ENCODE measurements at regions of chr20 and their contacts with region 1.

Region 1: GRCh38 chr20:56551571-56551970 is 18.5 kb downstream of the FAM209B start:
- DNase-seq: no peak
- H3K4me3 ChIP-seq: no peak overlapping the region
- H3K27ac ChIP-seq: no peak overlapping the region
- H3K4me1 ChIP-seq: peaks cover 6 to 13% (median 9%) of the 10 kb centered on the region in 4 experiments
- H3K27me3 ChIP-seq: peaks cover 0 to 2% (median 0%) of the 10 kb centered on the region in 5 experiments

Region 2: DNA sequence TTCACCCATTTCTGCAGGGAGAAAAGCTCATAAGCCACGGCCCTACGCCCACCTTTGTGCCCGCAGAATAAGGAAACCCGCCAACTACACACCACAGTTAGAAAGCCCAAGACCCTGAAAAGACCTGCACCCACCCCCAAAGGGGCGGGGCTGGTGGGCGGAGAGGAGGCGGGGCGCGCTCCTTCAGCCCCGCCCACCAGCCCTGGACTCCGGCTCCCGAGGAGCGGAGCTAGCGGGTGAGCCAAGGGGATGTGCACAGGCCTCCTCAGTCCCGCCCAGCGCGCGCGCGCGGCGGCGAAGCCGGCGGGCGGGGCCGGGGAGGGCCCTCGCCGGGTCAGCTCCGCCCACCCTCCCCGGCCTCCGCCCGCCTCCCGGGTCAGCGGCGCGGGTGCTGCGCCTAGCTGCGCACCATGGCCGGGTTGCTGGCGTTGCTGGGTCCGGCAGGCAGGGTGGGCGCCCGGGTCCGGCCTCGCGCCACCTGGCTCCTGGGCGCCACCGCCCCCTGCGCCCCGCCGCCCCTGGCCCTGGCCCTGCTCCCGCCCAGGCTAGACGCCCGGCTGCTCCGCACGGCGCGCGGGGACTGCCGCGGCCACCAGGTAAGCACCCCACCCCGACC is 192.9 kb before region 1 on chr20 and contains the start of gene FAM210B:
- CTCF ChIA-PET with region 1: no interaction called
- POLR2A ChIA-PET with region 1: no interaction called
- DNase-seq: peak; percentile 84 to 88 (median 86)
- H3K4me3 ChIP-seq: peak within 1 kb of the TSS; percentile 38 to 91 (median 78)
- H3K27ac ChIP-seq: peak within 1 kb of the TSS in 1 of 2 experiments; percentile 57
- H3K4me1 ChIP-seq: peaks cover 0 to 26% (median 18%) of the 10 kb centered on the region in 4 experiments
- H3K27me3 ChIP-seq: no peaks in the 10 kb centered on the region

Region 3: GRCh38 chr20:56497326-56497725 is 54.2 kb before region 1 on chr20:
- CTCF ChIA-PET with region 1: no interaction called
- POLR2A ChIA-PET with region 1: no interaction called
- DNase-seq: no peak
- H3K4me3 ChIP-seq: no peak overlapping the region
- H3K27ac ChIP-seq: no peak overlapping the region
- H3K4me1 ChIP-seq: no peaks in the 10 kb centered on the region
- H3K27me3 ChIP-seq: no peaks in the 10 kb centered on the region

Region 4: GRCh38 chr20:56566271-56566981 is 14.9 kb after region 1 on chr20:
- CTCF ChIA-PET with region 1: interaction called, 10 read pairs
- POLR2A ChIA-PET with region 1: no interaction called
- DNase-seq: no peak
- H3K4me3 ChIP-seq: no peak overlapping the region
- H3K27ac ChIP-seq: no peak overlapping the region
- H3K4me1 ChIP-seq: no peaks in the 10 kb centered on the region
- H3K27me3 ChIP-seq: peaks cover 0 to 4% (median 0%) of the 10 kb centered on the region in 5 experiments

Region 5: GRCh38 chr20:56574531-56575142 is 23.1 kb after region 1 on chr20:
- CTCF ChIA-PET with region 1: interaction called, 21 read pairs
- POLR2A ChIA-PET with region 1: interaction called, 5 read pairs
- DNase-seq: no peak
- H3K4me3 ChIP-seq: no peak overlapping the region
- H3K27ac ChIP-seq: no peak overlapping the region
- H3K4me1 ChIP-seq: no peaks in the 10 kb centered on the region
- H3K27me3 ChIP-seq: peaks cover 0 to 5% (median 2%) of the 10 kb centered on the region in 5 experiments

Region 6: DNA sequence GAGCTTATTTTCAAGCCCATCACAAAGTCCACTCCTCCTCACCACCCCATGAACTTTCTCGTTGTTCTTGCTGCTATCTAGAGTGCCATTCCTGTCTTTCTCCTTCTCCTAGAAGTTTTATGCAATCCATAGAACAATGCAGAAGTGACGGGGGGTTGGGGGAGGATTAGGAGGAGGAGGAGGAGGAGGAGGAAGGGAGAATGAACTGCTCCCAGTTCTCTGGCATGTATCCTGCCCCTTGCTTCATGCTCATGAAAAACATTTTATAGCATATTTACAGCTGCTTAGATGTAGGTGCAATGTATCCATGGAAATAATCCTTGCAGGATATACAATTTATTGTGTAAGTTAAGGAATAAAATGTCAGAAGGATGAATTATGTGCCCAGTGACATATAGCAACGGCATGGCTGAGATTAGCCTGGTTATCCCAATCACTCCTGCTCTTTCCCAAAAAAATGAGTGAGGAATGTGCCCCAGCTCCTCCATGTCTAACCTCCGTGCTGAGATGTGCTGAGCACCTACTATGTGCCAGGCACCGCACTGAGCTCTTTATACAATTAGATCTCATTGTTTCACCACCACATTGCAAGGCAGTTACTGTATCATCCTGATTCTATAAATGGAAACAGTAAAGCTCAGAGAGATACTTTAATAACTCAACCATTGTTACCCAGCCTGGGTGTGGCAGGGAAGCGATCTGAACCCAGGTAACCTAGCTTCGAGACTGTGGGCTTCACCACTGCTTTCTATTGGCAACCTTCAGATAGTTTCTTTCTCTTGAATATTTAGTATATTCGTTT is 35.9 kb after region 1 on chr20:
- CTCF ChIA-PET with region 1: no interaction called
- POLR2A ChIA-PET with region 1: no interaction called
- DNase-seq: no peak
- H3K4me3 ChIP-seq: no peak overlapping the region
- H3K27ac ChIP-seq: no peak overlapping the region
- H3K4me1 ChIP-seq: no peaks in the 10 kb centered on the region
- H3K27me3 ChIP-seq: peaks cover 0 to 11% (median 2%) of the 10 kb centered on the region in 5 experiments

Region 7: DNA sequence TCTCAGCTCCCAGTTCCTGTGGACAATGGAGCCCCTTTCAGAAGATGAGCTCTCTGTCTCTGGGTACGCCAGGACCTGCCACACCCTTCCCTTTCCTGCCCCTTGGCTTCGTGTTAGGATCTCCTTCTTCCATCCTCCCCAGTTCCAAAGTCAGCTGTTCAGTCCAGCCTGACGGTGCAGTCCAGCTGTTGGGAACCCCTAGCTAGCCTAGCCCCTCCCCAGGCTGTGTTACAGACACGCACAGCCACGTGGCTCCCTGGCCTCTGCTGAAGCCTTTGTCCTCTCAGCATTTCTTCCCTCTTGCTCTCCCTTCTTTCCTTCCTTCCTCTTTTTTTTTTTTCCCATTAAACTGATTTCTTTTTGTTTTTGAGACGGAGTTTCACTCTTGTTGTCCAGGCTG is 65.1 kb after region 1 on chr20:
- CTCF ChIA-PET with region 1: no interaction called
- POLR2A ChIA-PET with region 1: no interaction called
- DNase-seq: no peak
- H3K4me3 ChIP-seq: no peak overlapping the region
- H3K27ac ChIP-seq: no peak overlapping the region
- H3K4me1 ChIP-seq: no peaks in the 10 kb centered on the region
- H3K27me3 ChIP-seq: peaks cover 0 to 14% (median 3%) of the 10 kb centered on the region in 5 experiments

Region 8: DNA sequence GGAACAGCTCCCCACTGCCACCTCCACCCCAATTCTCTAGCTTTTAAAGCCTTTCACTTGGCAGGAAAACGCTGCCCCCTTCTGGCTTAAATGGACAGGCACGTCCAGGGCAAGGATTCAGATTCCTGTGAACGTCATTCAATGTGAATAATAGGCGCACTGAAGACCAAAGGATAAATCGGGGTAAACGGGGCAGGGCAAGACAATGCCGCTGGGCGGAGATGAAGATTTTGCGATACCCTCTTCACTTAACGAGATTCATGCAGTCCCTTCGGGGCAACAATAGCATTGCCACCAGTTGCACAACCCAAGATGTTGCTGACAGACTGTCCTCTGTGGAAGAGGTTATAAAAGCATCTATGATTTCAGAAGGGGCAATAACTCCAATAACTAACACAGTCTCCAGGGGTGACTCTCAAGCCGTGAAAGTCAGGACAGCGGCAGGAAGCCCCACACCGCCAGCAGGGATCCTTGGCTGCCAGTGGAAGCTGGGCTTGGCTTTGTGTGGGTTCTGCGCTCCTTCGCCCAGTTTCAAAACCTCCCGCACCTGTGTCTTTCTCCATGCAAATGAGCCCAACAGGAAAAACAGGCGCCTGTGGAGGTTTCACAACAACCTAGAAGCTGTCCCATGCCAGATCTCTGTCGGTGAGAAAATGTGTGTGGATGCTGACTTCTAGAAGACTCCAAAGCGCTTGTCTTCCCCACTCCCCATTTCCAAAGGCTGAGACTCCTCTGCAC is 423.1 kb after region 1 on chr20:
- CTCF ChIA-PET with region 1: interaction called, 12 read pairs
- POLR2A ChIA-PET with region 1: no interaction called
- DNase-seq: peak; percentile 13 to 45 (median 38)
- H3K4me3 ChIP-seq: no peak overlapping the region
- H3K27ac ChIP-seq: no peak overlapping the region
- H3K4me1 ChIP-seq: no peaks in the 10 kb centered on the region
- H3K27me3 ChIP-seq: peaks cover 0 to 91% (median 27%) of the 10 kb centered on the region in 5 experiments

Region 9: DNA sequence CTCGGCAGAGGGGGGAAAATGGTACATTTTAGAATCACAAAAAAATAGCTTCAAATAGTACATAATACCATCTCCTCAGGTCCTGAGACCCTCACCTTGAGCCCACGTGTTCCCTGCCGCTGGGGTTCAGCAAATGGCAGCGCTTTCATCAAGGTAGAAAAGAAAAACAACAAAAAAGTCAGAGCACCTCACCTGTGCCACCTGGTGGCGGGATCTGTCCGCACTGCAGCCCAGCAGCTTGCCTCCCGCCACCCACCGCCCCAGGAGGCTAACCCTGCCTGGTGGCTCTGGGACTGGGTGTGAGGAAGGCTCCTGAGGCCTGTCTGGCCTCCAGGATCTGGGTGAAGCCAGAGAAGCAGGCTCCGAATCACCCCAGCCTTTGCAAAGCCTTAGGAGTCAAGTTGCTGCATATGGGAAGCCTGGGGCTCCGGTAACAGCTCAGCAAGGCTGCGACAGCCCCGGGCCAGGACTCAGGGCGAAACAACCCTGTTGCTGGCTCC is 444.1 kb after region 1 on chr20:
- CTCF ChIA-PET with region 1: interaction called, 14 read pairs
- POLR2A ChIA-PET with region 1: no interaction called
- DNase-seq: peak in 2 of 3 donors; percentile 2 to 13
- H3K4me3 ChIP-seq: no peak overlapping the region
- H3K27ac ChIP-seq: no peak overlapping the region
- H3K4me1 ChIP-seq: no peaks in the 10 kb centered on the region
- H3K27me3 ChIP-seq: peaks cover 0 to 13% (median 0%) of the 10 kb centered on the region in 5 experiments